ENCODE measurements at regions of chr1 and their contacts with region 1.

Region 1: DNA sequence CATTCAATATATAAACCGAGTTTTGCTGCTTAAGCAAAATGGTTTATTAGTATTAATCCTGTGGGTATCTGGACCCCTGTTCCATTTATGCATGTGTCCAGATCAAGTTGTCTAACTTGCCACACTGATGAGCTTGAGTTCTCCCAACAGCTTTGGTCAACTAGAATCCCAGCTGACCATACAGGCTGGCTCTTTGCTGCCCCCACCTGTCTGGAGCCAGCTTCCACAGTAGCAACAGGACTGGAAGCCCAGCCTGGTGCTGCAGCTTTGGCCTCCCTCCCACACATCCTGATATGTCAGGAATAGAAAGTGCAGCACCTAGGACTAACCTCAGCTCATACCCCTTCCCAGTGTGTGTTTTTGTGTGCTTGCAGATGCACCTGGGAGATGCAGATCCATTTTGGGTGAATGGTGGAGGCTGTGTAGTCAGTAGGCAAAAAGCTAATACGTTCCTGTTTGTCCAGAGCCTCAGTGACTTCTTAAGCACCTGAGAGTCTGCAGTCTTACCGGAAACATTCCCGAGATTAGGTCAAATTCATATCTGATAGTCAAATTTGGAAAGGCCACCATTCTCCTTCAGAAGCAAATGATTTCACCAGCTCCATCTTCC is 40.9 kb upstream of the BEND5 start:
- DNase-seq: peak; percentile 44 to 74 (median 71)
- ATAC-seq: peak; percentile 71
- H3K4me3 ChIP-seq: no peak overlapping the region
- H3K4me1 ChIP-seq: no peaks in the 10 kb centered on the region
- CTCF ChIP-seq: peak; percentile 44

Region 2: DNA sequence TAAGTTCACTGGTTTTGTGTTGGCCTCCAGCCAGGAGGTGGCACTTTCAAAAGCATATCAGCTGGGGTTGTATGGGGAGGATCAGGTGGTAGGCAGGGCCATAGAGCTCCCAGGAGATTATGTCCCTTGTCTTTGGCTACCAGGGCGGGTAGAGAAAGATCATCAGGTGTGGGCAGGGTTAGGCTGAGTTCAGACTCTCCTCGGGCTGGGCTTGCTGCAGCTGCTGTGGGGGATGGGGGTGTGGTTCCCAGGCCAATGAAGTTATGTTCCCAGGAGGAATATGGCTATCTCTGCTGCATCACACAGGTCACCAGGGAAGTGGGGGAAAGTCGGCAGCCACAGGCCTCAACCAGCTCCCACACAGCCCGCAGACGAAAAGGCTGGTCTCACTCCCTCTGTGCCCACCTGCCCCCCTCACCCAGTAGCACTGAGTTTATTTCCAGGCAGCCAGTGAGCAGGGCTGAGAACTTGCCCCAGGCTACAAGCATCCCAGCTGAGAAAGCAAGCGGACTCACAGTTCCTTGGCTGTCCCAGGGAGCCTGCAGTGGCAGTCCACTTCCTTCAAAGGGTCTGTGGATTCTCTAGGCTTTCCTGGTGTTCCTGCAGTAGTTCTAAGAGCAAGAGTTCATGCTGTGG is 526.3 kb before region 1 on chr1:
- intact Hi-C with region 1: no loop called
- DNase-seq: no peak
- ATAC-seq: no peak
- H3K4me3 ChIP-seq: no peak overlapping the region
- H3K4me1 ChIP-seq: no peaks in the 10 kb centered on the region
- CTCF ChIP-seq: no peak

Region 3: DNA sequence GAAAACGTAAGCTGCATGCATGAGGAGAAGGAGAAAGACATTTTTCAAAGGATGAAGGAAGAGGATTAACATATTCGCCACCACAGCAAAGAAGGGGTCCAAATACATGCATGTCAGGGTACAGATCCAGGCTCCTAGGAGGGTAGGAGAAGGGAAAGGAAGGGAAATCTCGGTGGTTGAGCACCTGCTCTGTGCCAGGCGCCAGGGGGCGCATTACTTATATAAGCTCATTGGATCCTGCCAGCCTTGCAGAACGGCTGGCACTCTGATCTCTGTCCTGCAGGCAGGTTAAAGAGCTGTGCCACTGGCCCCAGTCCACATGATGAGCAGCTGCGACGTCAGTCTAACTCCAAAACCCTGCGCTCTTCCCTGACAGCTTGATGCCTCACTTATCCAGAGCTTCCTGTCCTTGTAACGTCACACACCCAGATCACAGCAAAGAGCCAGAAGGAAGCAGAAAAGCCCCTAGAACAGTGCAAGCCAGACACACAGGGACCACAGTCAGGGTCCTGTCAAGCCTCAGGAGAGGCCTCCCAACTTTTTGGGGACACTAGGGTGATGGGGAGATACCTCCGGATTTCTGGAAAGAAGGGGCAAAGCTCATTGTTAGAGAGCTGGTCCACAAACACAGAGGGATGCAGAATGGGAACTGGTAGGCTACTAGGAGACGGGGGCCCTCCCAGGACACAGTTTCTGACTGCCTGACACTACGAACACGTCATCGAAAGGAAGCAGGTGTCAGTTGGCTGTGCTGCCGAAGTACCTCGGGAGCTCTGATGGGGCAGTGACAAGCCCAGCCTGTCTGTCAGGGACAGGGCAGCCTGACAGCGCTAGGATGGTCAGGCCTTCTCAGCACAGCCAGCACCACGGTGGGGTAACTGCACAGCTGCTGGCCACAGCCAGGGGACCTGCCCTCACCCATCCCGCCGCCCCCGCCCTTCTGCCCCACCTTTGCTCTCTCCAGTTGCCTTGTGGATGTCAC is 140.0 kb before region 1 on chr1:
- intact Hi-C with region 1: loop called in 1 of 2 experiments (anchors 10 kb)
- DNase-seq: peak; percentile 65 to 82 (median 75)
- ATAC-seq: peak; percentile 83
- H3K4me3 ChIP-seq: no peak overlapping the region
- H3K4me1 ChIP-seq: no peaks in the 10 kb centered on the region
- CTCF ChIP-seq: peak; percentile 58